Endothelial cell of umbilical vein (primary cell): ENCODE measurements at regions of chr10 and their contacts with region 1.

Region 1: DNA sequence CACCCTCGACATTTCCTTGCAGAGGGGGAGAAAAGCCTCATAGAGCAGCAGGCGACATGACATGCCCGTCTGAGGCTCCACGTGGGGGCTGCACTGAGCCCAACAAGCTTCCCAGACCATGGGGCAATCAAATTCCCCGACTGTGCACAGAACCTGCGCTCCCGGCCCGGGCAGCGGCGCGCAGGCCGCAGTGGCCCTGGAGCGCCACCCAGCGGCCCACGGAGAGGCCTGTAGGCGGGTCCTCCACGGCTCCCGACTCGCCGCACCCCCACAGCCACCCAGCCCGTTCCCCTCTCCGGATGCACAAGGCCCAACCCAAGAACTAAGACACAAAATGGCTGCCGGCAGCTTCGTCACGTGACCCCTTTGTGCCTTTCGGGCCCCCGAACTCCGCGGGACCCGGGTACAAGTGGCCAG is 816 bp downstream of the EPC1 start:
- DNase-seq: peak; percentile 96
- H3K4me3 ChIP-seq: peak overlapping the region; percentile 75 to 90 (median 89)
- H3K27ac ChIP-seq: peak overlapping the region; percentile 93
- H3K4me1 ChIP-seq: peaks cover 17% of the 10 kb centered on the region
- H3K27me3 ChIP-seq: no peaks in the 10 kb centered on the region
- CTCF ChIP-seq: peak; percentile 98 to 99
- POLR2A ChIP-seq: no peak

Region 2: DNA sequence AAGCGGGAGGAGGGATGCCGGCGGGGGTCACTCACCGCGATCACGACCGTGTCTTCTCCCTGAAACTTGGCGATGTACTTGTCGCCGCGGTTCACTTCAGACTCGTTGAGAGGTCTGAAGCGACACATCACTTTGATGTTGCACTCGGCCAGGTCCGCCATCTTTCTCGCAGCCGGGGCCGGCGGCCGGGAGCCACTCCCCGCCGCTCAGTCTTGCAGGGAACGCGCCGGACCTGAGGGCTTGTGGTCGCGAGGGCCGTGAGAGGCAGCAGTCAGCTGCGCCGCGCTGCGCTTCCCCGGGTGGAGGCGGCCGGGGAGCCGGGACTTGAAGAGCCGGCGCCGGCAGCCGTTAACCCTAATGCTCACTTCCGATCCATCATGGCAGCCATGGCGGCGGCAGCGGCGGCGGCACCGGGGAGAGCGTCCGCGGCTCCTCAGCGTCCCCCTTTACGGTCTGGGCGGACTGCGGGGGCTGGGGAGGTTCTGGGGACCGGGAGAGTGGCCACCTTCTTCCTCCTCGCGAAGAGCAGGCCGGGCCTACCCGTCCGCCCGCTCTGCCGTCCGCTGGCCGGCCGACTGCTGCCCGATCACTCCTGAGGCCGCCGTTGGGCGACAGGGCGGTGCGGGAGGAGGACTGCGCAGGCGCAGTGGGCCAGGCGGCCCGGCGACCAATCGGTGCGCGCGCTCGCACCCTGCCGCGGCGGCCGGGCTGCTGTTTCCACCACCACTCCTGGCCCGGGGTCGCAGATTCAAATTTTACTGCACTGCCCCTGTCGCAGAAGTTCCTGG is 290.1 kb before region 1 on chr10 and contains the start of gene KIF5B:
- CTCF ChIA-PET with region 1: no interaction called
- POLR2A ChIA-PET with region 1: no interaction called
- dilution Hi-C with region 1: no loop called
- intact Hi-C with region 1: loop called (anchors 5 kb)
- DNase-seq: peak; percentile 91
- H3K4me3 ChIP-seq: peak within 1 kb of the TSS; percentile 80 to 98 (median 81)
- H3K27ac ChIP-seq: peak within 1 kb of the TSS; percentile 79
- H3K4me1 ChIP-seq: peaks cover 33% of the 10 kb centered on the region
- H3K27me3 ChIP-seq: no peaks in the 10 kb centered on the region
- CTCF ChIP-seq: no peak
- POLR2A ChIP-seq: peak; percentile 99
- total RNA-seq, gene KIF5B: 152 and 159 TPM in 2 replicates

Region 3: GRCh38 chr10:32073659-32074058 is 272.5 kb before region 1 on chr10:
- CTCF ChIA-PET with region 1: no interaction called
- POLR2A ChIA-PET with region 1: no interaction called
- dilution Hi-C with region 1: no loop called
- intact Hi-C with region 1: no loop called
- DNase-seq: no peak
- H3K4me3 ChIP-seq: no peak overlapping the region
- H3K27ac ChIP-seq: no peak overlapping the region
- H3K4me1 ChIP-seq: no peaks in the 10 kb centered on the region
- H3K27me3 ChIP-seq: peaks cover 0 to 9% of the 10 kb centered on the region in 2 experiments
- CTCF ChIP-seq: no peak
- POLR2A ChIP-seq: no peak

Region 4: GRCh38 chr10:32207544-32207943 is 138.6 kb before region 1 on chr10:
- CTCF ChIA-PET with region 1: interaction called, 8 read pairs
- POLR2A ChIA-PET with region 1: no interaction called
- dilution Hi-C with region 1: no loop called
- intact Hi-C with region 1: loop called (anchors 5 kb)
- DNase-seq: peak; percentile 73
- H3K4me3 ChIP-seq: no peak overlapping the region
- H3K27ac ChIP-seq: no peak overlapping the region
- H3K4me1 ChIP-seq: peaks cover 22% of the 10 kb centered on the region
- H3K27me3 ChIP-seq: no peaks in the 10 kb centered on the region
- CTCF ChIP-seq: peak; percentile 68 to 79
- POLR2A ChIP-seq: no peak

Region 5: GRCh38 chr10:32298054-32298812 is 47.9 kb before region 1 on chr10:
- CTCF ChIA-PET with region 1: interaction called, 9 read pairs
- POLR2A ChIA-PET with region 1: no interaction called
- dilution Hi-C with region 1: no loop called
- intact Hi-C with region 1: loop called (anchors 1 kb)
- DNase-seq: peak; percentile 81
- H3K4me3 ChIP-seq: peak overlapping the region in 1 of 3 experiments; percentile 43
- H3K27ac ChIP-seq: peak overlapping the region; percentile 88
- H3K4me1 ChIP-seq: peaks cover 19% of the 10 kb centered on the region
- H3K27me3 ChIP-seq: no peaks in the 10 kb centered on the region
- CTCF ChIP-seq: no peak
- POLR2A ChIP-seq: no peak

Region 6: GRCh38 chr10:32445740-32446535 is 99.8 kb after region 1 on chr10 and contains the start of gene CCDC7:
- CTCF ChIA-PET with region 1: no interaction called
- POLR2A ChIA-PET with region 1: no interaction called
- dilution Hi-C with region 1: no loop called
- intact Hi-C with region 1: loop called (anchors 1 kb)
- DNase-seq: peak; percentile 93
- H3K4me3 ChIP-seq: peak within 1 kb of the TSS; percentile 47 to 91 (median 82)
- H3K27ac ChIP-seq: peak within 1 kb of the TSS; percentile 100
- H3K4me1 ChIP-seq: peaks cover 8% of the 10 kb centered on the region
- H3K27me3 ChIP-seq: peaks cover 2 to 16% of the 10 kb centered on the region in 2 experiments
- CTCF ChIP-seq: peak; percentile 53 to 63
- POLR2A ChIP-seq: peak; percentile 93
- total RNA-seq, gene CCDC7: 6.6 and 8.2 TPM in 2 replicates

Region 7: GRCh38 chr10:32471232-32471631 is 125.1 kb after region 1 on chr10:
- CTCF ChIA-PET with region 1: no interaction called
- POLR2A ChIA-PET with region 1: no interaction called
- dilution Hi-C with region 1: no loop called
- intact Hi-C with region 1: no loop called
- DNase-seq: no peak
- H3K4me3 ChIP-seq: no peak overlapping the region
- H3K27ac ChIP-seq: no peak overlapping the region
- H3K4me1 ChIP-seq: no peaks in the 10 kb centered on the region
- H3K27me3 ChIP-seq: no peaks in the 10 kb centered on the region
- CTCF ChIP-seq: no peak
- POLR2A ChIP-seq: no peak